Breast epithelium (tissue), 4 donors: ENCODE measurements at regions of chr9 and their contacts with region 1.

Region 1: GRCh38 chr9:7974335-7974960 is 174.9 kb upstream of the DMAC1 start:
- DNase-seq: no peak
- H3K4me3 ChIP-seq: no peak overlapping the region
- H3K27ac ChIP-seq: no peak overlapping the region
- H3K4me1 ChIP-seq: no peaks in the 10 kb centered on the region
- H3K27me3 ChIP-seq: no peaks in the 10 kb centered on the region
- CTCF ChIP-seq: no peak
- POLR2A ChIP-seq: no peak

Region 2: DNA sequence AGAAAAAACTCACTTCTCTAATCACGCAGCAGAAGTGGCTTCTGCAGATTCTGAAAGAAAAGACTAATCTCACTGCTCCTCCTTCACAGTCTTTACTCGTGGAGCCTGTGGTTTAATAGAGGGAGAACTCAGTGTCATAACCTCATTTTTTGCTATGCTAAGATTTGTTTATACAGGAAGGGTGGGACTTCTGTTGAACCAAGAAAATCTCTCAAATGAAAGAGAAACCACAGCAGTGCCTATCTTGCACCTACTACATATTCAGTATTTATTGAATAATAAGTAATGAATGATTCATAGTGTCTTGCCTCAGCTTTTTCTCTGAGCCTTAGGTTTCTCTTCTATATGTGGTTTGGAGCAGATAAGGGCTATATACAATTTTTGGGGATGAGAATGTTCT is 38.8 kb before region 1 on chr9:
- intact Hi-C with region 1: loop called (anchors 2 kb)
- DNase-seq: no peak
- H3K4me3 ChIP-seq: no peak overlapping the region
- H3K27ac ChIP-seq: no peak overlapping the region
- H3K4me1 ChIP-seq: no peaks in the 10 kb centered on the region
- H3K27me3 ChIP-seq: no peaks in the 10 kb centered on the region
- CTCF ChIP-seq: no peak
- POLR2A ChIP-seq: no peak